ENCODE measurements at regions of chr3 and their contacts with region 1.

Region 1: GRCh38 chr3:120147072-120147871 is 53.0 kb upstream of the GSK3B start:
- DNase-seq: peak; percentile 54
- H3K4me3 ChIP-seq: no peak overlapping the region
- H3K27ac ChIP-seq: no peak overlapping the region
- H3K4me1 ChIP-seq: no peaks in the 10 kb centered on the region
- CTCF ChIP-seq: peak; percentile 78

Region 2: DNA sequence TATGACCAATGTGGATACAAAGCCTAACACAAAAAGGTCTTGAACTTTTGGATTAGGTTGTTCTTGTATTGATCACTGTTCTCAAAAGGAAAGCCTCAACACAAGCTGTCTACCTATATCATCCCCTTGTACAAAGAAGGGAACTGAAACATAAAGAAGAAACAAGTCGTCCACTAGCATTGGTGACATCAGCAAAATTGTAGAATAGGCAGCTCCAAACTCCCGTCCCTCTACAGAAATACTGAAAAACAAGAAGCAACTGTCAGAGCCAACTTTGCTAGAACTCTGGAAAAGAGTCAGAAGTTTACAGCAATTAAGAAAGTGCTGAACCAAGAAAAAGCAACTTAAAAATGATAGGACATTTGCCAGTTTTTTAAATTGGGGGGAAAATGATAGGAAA is 372.8 kb before region 1 on chr3:
- CTCF ChIA-PET with region 1: no interaction called
- POLR2A ChIA-PET with region 1: no interaction called
- intact Hi-C with region 1: no loop called
- DNase-seq: no peak
- H3K4me3 ChIP-seq: no peak overlapping the region
- H3K27ac ChIP-seq: no peak overlapping the region
- H3K4me1 ChIP-seq: no peaks in the 10 kb centered on the region
- CTCF ChIP-seq: no peak

Region 3: GRCh38 chr3:119819806-119820205 is 327.5 kb before region 1 on chr3:
- CTCF ChIA-PET with region 1: no interaction called
- POLR2A ChIA-PET with region 1: no interaction called
- intact Hi-C with region 1: loop called (anchors 2 kb)
- DNase-seq: no peak
- H3K4me3 ChIP-seq: no peak overlapping the region
- H3K27ac ChIP-seq: no peak overlapping the region
- H3K4me1 ChIP-seq: no peaks in the 10 kb centered on the region
- CTCF ChIP-seq: no peak

Region 4: GRCh38 chr3:119891944-119892721 is 255.1 kb before region 1 on chr3:
- CTCF ChIA-PET with region 1: interaction called, 4 read pairs
- POLR2A ChIA-PET with region 1: no interaction called
- intact Hi-C with region 1: loop called (anchors 5 kb)
- DNase-seq: peak; percentile 48
- H3K4me3 ChIP-seq: no peak overlapping the region
- H3K27ac ChIP-seq: no peak overlapping the region
- H3K4me1 ChIP-seq: no peaks in the 10 kb centered on the region
- CTCF ChIP-seq: peak; percentile 88

Region 5: GRCh38 chr3:120081719-120082118 is 65.6 kb before region 1 on chr3:
- CTCF ChIA-PET with region 1: no interaction called
- POLR2A ChIA-PET with region 1: no interaction called
- intact Hi-C with region 1: no loop called
- DNase-seq: no peak
- H3K4me3 ChIP-seq: no peak overlapping the region
- H3K27ac ChIP-seq: no peak overlapping the region
- H3K4me1 ChIP-seq: no peaks in the 10 kb centered on the region
- CTCF ChIP-seq: no peak

Region 6: GRCh38 chr3:120129718-120130513 is 17.4 kb before region 1 on chr3:
- CTCF ChIA-PET with region 1: no interaction called
- POLR2A ChIA-PET with region 1: no interaction called
- intact Hi-C with region 1: no loop called
- DNase-seq: no peak
- H3K4me3 ChIP-seq: no peak overlapping the region
- H3K27ac ChIP-seq: no peak overlapping the region
- H3K4me1 ChIP-seq: no peaks in the 10 kb centered on the region
- CTCF ChIP-seq: no peak

Measured in OCI-LY7 (cell line).